Ovary (tissue), 10 donors: ENCODE measurements at regions of chr10 and their contacts with region 1.

Region 1: DNA sequence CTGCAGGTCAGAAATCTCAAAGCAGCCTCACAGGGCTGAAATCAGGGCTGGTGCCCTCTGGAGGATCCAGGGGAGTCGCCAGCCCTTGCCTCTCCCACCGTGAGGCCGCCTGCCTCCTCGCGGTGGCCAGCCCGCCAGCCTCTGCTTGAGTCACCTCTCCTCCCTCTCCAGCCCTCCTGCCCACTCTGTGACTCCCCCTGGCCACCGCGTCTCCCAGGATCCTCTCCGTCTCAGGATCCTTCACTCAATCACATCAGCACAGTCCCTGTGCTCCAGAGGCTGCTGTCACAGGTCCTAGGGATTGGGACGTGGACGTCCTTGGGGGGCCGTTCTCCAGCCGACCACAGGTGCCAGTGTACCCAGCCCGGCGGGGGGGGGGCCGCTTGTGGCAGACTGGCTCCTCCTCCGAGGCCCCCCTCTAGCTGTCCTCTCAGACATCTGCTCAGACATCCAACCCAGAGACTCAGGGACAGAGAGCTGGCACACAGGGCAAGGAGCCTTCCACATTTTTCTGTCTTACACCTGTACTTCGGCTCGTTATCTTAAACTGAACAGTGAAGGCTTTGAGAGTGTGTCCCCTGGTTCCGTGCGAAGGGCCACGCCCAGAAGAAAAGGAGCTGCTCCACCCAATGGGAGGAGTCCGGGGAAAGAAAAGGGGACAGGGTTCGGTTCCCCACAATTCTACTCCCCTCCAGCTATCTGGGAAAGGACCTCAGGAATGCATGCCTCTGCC is 9.4 kb upstream of the PPP2R2D start:
- DNase-seq: no peak
- H3K4me3 ChIP-seq: no peak overlapping the region
- H3K27ac ChIP-seq: peak overlapping the region in 1 of 2 donors; percentile 45
- H3K4me1 ChIP-seq: peaks cover 9% of the 10 kb centered on the region
- H3K27me3 ChIP-seq: no peaks in the 10 kb centered on the region
- CTCF ChIP-seq: no peak
- EP300 ChIP-seq: no peak
- POLR2A ChIP-seq: no peak

Region 2: GRCh38 chr10:131786756-131787605 is 104.4 kb before region 1 on chr10:
- intact Hi-C with region 1: no loop called
- DNase-seq: peak in 4 of 5 donors; percentile 25 to 53 (median 42)
- H3K4me3 ChIP-seq: no peak overlapping the region
- H3K27ac ChIP-seq: no peak overlapping the region
- H3K4me1 ChIP-seq: no peaks in the 10 kb centered on the region
- H3K27me3 ChIP-seq: no peaks in the 10 kb centered on the region
- CTCF ChIP-seq: peak; percentile 24 to 64 (median 51)
- EP300 ChIP-seq: no peak
- POLR2A ChIP-seq: no peak

Region 3: DNA sequence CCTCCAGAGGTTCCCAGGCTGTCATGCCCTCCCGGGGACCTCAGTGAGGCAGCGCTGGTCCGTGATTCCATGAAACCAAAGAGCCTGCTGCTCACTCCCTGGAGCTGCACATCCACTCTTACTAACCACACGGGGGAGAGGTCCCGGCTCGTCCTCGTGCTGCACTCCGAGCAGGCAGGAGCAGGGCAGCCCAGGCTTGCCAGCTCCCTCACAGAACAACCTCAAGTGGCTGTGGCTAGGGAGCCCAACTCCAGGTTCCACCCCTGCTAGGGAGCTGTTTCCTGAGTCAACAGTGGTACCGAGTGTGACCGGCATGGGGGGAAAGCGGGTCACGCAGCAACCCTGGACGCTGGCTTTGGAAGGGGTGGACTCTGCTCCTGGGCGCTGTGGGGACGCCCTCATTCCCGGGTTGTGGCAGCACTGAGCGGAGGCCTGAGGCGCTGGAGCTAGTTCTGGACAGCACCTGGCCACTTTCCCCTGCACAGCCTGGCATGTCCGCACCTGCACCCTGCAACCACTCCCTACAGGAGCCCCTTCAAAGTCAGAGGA is 18.5 kb before region 1 on chr10:
- intact Hi-C with region 1: no loop called
- DNase-seq: peak in 1 of 5 donors; percentile 11
- H3K4me3 ChIP-seq: no peak overlapping the region
- H3K27ac ChIP-seq: no peak overlapping the region
- H3K4me1 ChIP-seq: no peaks in the 10 kb centered on the region
- H3K27me3 ChIP-seq: no peaks in the 10 kb centered on the region
- CTCF ChIP-seq: no peak
- EP300 ChIP-seq: no peak
- POLR2A ChIP-seq: no peak

Region 4: DNA sequence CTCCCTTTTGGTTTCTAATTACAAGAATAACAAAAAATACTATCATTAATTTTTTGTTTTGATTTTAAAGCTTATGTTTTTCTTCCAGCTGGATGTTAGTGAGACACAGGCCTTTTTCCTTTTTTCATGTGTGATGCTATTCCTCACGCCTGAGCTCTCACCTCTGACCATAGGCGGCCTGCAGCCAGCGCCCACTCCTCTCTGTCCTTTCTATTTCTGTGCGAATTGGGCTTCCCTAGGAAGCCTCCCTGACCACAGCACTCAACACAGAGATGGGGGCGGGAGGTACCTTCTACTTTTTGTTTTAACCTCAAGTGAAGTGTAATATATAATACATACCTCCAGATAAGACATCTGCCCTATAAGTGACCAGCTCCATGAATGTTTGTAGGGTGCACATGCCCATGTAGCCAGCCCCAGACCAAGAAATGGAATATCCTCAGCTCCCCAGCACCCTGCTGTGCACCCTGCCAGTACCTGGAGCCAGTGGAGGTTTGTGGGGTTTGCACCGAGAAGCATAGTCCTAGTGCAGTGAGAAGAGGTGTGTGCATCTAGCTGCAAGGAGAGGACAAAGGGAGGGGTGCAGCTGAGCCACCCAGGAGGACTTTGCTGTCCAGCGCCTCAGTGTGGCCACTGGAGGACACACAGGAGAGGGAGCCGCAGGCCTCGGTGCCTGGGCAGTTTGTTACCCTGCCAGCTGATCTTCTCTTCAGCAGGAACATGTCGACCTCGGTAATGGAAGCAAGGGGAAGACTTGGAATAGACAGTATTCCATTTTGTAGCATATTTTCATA is 51.9 kb after region 1 on chr10:
- intact Hi-C with region 1: loop called in 2 of 4 experiments (anchors 5 to 10 kb)
- DNase-seq: peak in 4 of 5 donors; percentile 48 to 68 (median 64)
- H3K4me3 ChIP-seq: no peak overlapping the region
- H3K27ac ChIP-seq: peak overlapping the region in 1 of 2 donors; percentile 39
- H3K4me1 ChIP-seq: peaks cover 9% of the 10 kb centered on the region
- H3K27me3 ChIP-seq: no peaks in the 10 kb centered on the region
- CTCF ChIP-seq: peak in 1 of 3 donors; percentile 10
- EP300 ChIP-seq: no peak
- POLR2A ChIP-seq: no peak

Region 5: GRCh38 chr10:132115732-132116131 is 224.4 kb after region 1 on chr10:
- intact Hi-C with region 1: no loop called
- DNase-seq: peak in 2 of 5 donors; percentile 21 to 50
- H3K4me3 ChIP-seq: no peak overlapping the region
- H3K27ac ChIP-seq: no peak overlapping the region
- H3K4me1 ChIP-seq: no peaks in the 10 kb centered on the region
- H3K27me3 ChIP-seq: no peaks in the 10 kb centered on the region
- CTCF ChIP-seq: no peak
- EP300 ChIP-seq: no peak
- POLR2A ChIP-seq: no peak